Activated naive CD4-positive, alpha-beta T cell treated with anti-CD3 and anti-CD28 coated beads, Interleukin-2, amount 10 ng/mL, durations not matched to agents 7 days and 5 days (primary cell): ENCODE measurements at regions of chr19 and their contacts with region 1.

Region 1: DNA sequence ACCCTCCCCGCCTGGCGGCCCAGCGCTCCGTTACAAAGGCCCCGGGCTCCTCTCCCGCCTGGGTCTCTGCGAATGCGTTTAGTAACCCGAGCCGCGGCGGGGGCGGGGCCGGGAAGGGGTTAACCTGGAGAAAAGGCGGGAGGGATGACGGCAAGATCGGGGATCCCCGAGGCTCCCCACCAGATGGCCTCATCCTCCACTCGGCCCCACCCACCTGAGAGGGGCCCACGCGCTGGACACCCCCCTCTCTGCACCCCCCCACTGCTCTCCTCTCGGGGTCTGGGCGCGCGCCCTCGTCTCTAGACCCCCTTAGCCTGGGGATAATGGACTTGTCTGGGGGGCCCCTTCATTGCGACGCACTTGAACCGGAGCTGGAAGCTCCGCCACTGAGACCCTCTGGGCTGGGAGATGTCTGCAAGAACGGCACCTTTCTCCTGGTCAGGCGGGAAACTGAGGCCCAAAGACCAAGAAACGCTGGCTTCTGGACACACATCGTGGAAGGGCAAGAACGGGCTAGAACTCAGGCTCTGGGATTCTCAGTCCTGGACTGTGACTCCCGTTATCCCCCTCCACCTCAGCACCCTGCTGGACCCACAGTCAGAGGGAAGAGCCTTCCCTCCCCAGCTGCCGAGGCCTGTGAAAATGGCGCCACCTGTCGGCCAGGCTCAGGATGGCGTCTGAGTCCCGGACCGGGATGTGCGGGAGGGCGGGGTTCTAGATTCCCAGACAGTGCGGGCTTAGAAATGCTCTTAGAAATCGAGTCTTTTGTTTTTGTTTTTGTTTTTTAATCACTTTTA is 2.9 kb upstream of the LTBP4 start:
- DNase-seq: peak; percentile 88
- H3K4me3 Mint-ChIP-seq: no peak overlapping the region
- H3K27ac Mint-ChIP-seq: no peak overlapping the region
- H3K4me1 Mint-ChIP-seq: peaks cover 63% of the 10 kb centered on the region
- H3K27me3 Mint-ChIP-seq: peaks cover 96% of the 10 kb centered on the region

Region 2: GRCh38 chr19:40305403-40305802 is 292.9 kb before region 1 on chr19:
- CTCF ChIA-PET with region 1: interaction called, 13 read pairs
- DNase-seq: peak; percentile 88
- H3K4me3 Mint-ChIP-seq: no peak overlapping the region
- H3K27ac Mint-ChIP-seq: no peak overlapping the region
- H3K4me1 Mint-ChIP-seq: no peaks in the 10 kb centered on the region
- H3K27me3 Mint-ChIP-seq: no peaks in the 10 kb centered on the region

Region 3: DNA sequence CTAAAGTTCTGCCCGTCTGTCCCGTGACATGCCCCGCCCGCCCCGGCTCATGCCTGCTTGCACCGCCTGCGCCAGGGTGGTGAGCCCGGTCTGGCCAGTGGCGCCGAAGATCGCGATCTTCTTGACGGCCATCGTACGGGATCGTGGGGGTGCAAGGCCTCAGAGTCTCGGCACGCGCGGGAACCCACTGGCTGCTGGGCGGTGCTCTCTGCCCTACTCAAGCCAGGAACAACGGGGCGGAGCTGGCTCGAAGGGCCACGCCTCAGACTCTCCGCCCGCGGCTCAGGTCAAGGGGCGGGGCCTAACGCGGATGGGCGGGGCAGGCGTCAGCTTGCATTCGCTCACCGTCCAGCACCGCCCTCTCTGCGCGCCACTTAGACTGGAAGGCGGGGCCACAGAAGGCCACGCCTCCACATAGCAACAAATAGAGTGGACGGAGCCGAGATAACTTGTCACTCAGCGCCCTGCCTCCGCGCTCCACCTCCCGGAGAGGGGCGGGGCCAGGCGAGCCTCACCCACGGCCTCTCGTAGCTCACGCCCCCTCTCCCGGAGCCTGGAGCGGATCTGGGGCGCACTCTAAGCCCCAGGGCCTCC is 132.7 kb before region 1 on chr19 and contains the start of gene BLVRB:
- CTCF ChIA-PET with region 1: interaction called, 19 read pairs
- DNase-seq: peak; percentile 100
- H3K4me3 Mint-ChIP-seq: peak within 1 kb of the TSS; percentile 84
- H3K27ac Mint-ChIP-seq: peak within 1 kb of the TSS; percentile 86
- H3K4me1 Mint-ChIP-seq: peaks cover 32% of the 10 kb centered on the region
- H3K27me3 Mint-ChIP-seq: peaks cover 34% of the 10 kb centered on the region

Region 4: DNA sequence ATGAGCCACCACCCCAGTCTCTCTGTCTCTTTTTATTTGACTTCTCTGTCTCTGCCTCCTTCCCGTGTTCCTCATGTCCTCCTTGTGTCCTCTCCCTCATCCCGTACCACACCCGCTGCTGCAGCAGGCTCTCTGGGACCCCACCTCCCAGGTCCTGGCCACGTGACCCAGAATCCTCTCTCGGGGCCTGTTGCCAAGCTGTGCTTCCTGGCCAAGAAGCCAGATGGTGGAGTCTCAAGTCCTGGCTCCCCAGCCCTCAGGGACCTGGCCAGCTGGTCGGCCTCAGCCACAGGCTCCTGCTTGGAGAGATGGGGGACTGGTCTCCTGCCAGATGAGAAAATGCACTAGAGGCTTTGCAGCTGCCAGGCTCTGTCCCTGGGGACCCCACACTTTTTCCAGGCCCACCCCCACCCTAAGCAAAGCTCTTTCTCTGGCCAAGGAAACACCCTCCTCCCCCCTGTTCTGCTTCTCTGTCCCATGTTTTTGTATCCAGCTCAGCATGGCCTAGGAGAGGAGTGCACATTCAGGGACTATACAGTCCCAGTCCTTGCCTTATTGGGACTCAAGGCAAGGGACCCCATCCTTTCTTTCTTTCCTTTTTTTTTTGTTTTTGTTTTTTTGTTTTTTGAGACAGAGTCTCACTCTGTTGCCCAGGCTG is 56.0 kb before region 1 on chr19:
- CTCF ChIA-PET with region 1: interaction called, 13 read pairs
- DNase-seq: no peak
- H3K4me3 Mint-ChIP-seq: no peak overlapping the region
- H3K27ac Mint-ChIP-seq: no peak overlapping the region
- H3K4me1 Mint-ChIP-seq: no peaks in the 10 kb centered on the region
- H3K27me3 Mint-ChIP-seq: peaks cover 40% of the 10 kb centered on the region

Region 5: DNA sequence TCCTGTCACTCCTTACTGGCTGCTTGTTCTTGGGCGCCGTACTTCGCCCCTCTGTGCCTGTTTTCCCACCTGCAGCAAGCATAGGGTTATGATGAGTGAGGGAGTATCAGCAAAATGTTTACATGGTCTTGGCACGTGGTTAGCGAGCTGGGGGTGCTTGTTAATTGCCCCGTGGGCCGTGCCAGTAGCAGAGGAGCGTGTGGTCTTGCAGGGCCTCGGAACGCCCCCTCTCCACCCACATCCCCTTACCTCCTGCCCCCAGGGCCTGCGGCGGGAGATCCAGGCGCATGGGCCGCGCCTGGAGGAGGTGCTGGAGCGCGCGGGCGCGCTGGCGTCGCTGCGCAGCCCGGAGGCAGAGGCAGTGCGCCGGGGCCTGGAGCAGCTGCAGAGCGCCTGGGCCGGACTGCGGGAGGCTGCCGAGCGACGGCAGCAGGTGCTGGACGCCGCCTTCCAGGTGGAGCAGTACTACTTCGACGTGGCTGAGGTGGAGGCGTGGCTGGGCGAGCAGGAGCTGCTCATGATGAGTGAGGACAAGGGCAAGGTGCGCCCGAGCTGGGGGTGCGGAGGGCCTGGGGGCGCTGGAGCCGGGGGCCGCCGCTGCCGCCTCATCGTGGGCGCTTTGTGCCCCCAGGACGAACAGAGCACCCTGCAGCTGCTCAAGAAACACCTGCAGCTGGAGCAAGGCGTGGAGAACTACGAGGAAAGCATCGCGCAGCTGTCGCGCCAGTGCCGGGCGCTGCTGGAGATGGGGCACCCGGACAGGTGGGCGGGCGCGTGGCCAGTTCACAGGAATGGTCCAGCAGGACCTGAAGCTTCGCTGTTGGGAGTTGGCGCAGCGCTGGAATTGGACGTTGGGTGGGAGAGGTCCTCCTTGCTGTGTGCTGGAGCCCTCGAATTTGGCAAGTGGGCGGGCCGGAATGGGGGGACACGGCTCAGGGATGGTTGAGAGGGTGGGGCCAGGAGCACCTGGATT is 44.1 kb before region 1 on chr19:
- CTCF ChIA-PET with region 1: interaction called, 11 read pairs
- DNase-seq: no peak
- H3K4me3 Mint-ChIP-seq: no peak overlapping the region
- H3K27ac Mint-ChIP-seq: no peak overlapping the region
- H3K4me1 Mint-ChIP-seq: peaks cover 3% of the 10 kb centered on the region
- H3K27me3 Mint-ChIP-seq: peaks cover 74% of the 10 kb centered on the region

Region 6: GRCh38 chr19:40633207-40633606 is 34.9 kb after region 1 on chr19:
- CTCF ChIA-PET with region 1: interaction called, 72 read pairs
- DNase-seq: no peak
- H3K4me3 Mint-ChIP-seq: no peak overlapping the region
- H3K27ac Mint-ChIP-seq: no peak overlapping the region
- H3K4me1 Mint-ChIP-seq: peaks cover 17% of the 10 kb centered on the region
- H3K27me3 Mint-ChIP-seq: peaks cover 41% of the 10 kb centered on the region

Region 7: DNA sequence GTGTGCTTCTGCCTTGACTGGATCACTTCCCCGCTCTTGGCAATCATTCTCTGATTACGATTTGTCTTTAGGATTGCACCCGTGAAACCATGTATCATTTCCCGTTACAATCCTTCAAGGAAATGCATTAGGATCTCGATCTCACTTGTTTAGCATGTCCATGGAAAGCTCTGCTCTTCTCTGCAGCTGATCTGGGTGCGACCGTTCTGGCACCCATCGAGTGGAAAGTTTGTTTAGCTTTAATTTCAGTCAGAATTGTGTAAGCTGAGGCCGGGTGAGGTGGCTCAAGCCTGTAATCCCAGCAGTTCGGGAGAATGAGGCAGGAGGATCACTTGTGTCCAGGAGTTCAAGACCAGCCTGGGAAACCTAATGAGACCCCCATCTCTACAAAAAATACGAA is 61.2 kb after region 1 on chr19:
- CTCF ChIA-PET with region 1: no interaction called
- DNase-seq: no peak
- H3K4me3 Mint-ChIP-seq: no peak overlapping the region
- H3K27ac Mint-ChIP-seq: no peak overlapping the region
- H3K4me1 Mint-ChIP-seq: peaks cover 19% of the 10 kb centered on the region
- H3K27me3 Mint-ChIP-seq: peaks cover 29% of the 10 kb centered on the region

Region 8: GRCh38 chr19:40721936-40722661 is 123.8 kb after region 1 on chr19:
- CTCF ChIA-PET with region 1: no interaction called
- DNase-seq: no peak
- H3K4me3 Mint-ChIP-seq: no peak overlapping the region
- H3K27ac Mint-ChIP-seq: no peak overlapping the region
- H3K4me1 Mint-ChIP-seq: peaks cover 49% of the 10 kb centered on the region
- H3K27me3 Mint-ChIP-seq: no peaks in the 10 kb centered on the region